IMR-90 (cell line): ENCODE measurements at regions of chr1 and their contacts with region 1.

Region 1: GRCh38 chr1:11176081-11176706 is 13.0 kb upstream of the ANGPTL7 start:
- DNase-seq: peak; percentile 33
- ATAC-seq: peak; percentile 21; the same call in 1 of the 2 replicates
- H3K4me3 ChIP-seq: no peak overlapping the region
- H3K27ac ChIP-seq: no peak overlapping the region
- H3K4me1 ChIP-seq: peaks cover 17% of the 10 kb centered on the region
- H3K27me3 ChIP-seq: no peaks in the 10 kb centered on the region
- CTCF ChIP-seq: no peak
- POLR2A ChIP-seq: no peak
- RAD21 ChIP-seq: no peak

Region 2: GRCh38 chr1:10975567-10976326 is 200.4 kb before region 1 on chr1:
- CTCF ChIA-PET with region 1: no interaction called
- POLR2A ChIA-PET with region 1: no interaction called
- dilution Hi-C with region 1: no loop called
- in situ Hi-C with region 1: no loop called
- intact Hi-C with region 1: no loop called
- DNase-seq: peak; percentile 64
- ATAC-seq: peak; percentile 75
- H3K4me3 ChIP-seq: no peak overlapping the region
- H3K27ac ChIP-seq: no peak overlapping the region
- H3K4me1 ChIP-seq: peaks cover 1% of the 10 kb centered on the region; the same call in 1 of the 2 replicates
- H3K27me3 ChIP-seq: peaks cover 13% of the 10 kb centered on the region
- CTCF ChIP-seq: no peak
- POLR2A ChIP-seq: no peak
- RAD21 ChIP-seq: no peak

Region 3: GRCh38 chr1:11158720-11159321 is 17.4 kb before region 1 on chr1:
- CTCF ChIA-PET with region 1: interaction called, 10 read pairs
- POLR2A ChIA-PET with region 1: no interaction called
- dilution Hi-C with region 1: no loop called
- in situ Hi-C with region 1: no loop called
- intact Hi-C with region 1: no loop called
- DNase-seq: peak; percentile 97
- ATAC-seq: peak; percentile 96
- H3K4me3 ChIP-seq: no peak overlapping the region
- H3K27ac ChIP-seq: peak overlapping the region; percentile 56; the same call in 1 of the 2 replicates
- H3K4me1 ChIP-seq: peaks cover 13% of the 10 kb centered on the region
- H3K27me3 ChIP-seq: no peaks in the 10 kb centered on the region
- CTCF ChIP-seq: no peak
- POLR2A ChIP-seq: no peak
- RAD21 ChIP-seq: no peak

Region 4: GRCh38 chr1:11248155-11248554 is 72.0 kb after region 1 on chr1:
- CTCF ChIA-PET with region 1: no interaction called
- POLR2A ChIA-PET with region 1: no interaction called
- dilution Hi-C with region 1: no loop called
- in situ Hi-C with region 1: no loop called
- intact Hi-C with region 1: no loop called
- DNase-seq: no peak
- ATAC-seq: no peak
- H3K4me3 ChIP-seq: no peak overlapping the region
- H3K27ac ChIP-seq: no peak overlapping the region
- H3K4me1 ChIP-seq: no peaks in the 10 kb centered on the region
- H3K27me3 ChIP-seq: no peaks in the 10 kb centered on the region
- CTCF ChIP-seq: no peak
- POLR2A ChIP-seq: no peak
- RAD21 ChIP-seq: no peak